Activated T-helper 1 cell treated with anti-CD3 and anti-CD28 coated beads, Interleukin-12 subunit alpha, Interleukin-12 subunit beta, Interleukin-2, Interleukin-4 antibody, amounts not matched to agents 30 ng/mL and 10 ng/mL and 1 ng/mL, durations not matched to agents 14 hours and 24 hours and 36 hours (primary cell): ENCODE measurements at regions of chr15 and their contacts with region 1.

Region 1: DNA sequence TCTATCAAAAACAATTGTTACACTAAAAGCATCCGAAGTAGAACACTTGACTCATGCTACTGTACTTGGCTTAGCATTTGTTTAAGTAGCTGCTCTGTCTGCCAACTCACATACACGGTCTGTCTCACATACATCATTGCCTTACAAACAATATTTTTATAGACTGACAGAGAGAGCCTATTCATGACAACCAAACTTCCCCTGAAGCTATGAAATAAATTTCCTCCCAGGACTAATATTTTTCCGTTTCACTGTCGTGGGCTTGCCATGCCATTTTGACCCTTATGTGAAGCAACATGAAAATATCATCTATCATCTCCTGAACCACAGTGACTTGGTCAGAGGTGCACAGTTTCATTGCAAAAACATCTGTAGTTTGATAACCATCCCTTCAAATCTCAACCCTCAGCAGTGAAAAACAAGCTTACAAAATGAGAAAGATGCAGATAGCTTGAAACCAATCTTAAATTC is 66.5 kb upstream of the PYGO1 start:
- DNase-seq: no peak
- H3K4me3 Mint-ChIP-seq: no peak overlapping the region
- H3K27ac Mint-ChIP-seq: no peak overlapping the region
- H3K4me1 Mint-ChIP-seq: no peaks in the 10 kb centered on the region
- H3K27me3 Mint-ChIP-seq: peaks cover 5% of the 10 kb centered on the region

Region 2: GRCh38 chr15:55694652-55695150 is 40.1 kb after region 1 on chr15:
- intact Hi-C with region 1: loop called (anchors 5 kb)
- DNase-seq: no peak
- H3K4me3 Mint-ChIP-seq: no peak overlapping the region
- H3K27ac Mint-ChIP-seq: no peak overlapping the region
- H3K4me1 Mint-ChIP-seq: no peaks in the 10 kb centered on the region
- H3K27me3 Mint-ChIP-seq: peaks cover 11% of the 10 kb centered on the region